ENCODE measurements at regions of chr6 and their contacts with region 1.

Region 1: DNA sequence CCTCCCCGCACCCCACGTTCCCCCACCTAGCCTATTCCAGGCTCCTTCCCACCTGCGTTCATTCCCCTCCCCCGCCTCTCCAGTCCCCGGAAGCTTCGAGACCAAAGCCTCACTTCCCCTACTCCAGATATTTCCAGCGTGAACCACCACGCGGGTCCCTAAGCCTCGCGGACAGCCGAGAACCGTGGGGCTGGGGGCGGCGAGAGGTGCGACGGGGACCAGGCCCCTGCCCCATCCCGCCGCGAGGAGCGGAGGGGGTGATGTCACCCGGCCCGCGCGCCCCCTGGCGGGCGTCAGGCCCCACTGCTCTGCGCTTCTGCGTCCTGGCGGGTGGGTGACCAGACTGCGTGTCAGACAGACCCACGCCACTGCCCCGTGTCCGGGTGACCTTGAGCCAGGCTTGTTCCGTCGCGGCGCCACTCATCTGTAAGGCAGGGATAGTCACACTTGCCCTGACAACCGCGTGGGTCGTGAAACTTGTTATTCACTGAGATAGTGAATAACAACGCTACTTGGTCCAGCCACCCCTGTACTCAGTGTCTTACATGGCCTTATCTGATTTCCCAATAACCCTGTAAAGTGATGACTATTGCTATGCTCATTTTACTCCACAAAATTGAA is 9.0 kb upstream of the HSP90AB1 start:
- DNase-seq: peak; percentile 70 to 85 (median 76)
- H3K4me3 ChIP-seq: peak overlapping the region; percentile 77
- H3K4me3 Mint-ChIP-seq: peak overlapping the region; percentile 84 to 95 (median 89)
- H3K27ac ChIP-seq: peak overlapping the region; percentile 87
- H3K27ac Mint-ChIP-seq: peak overlapping the region; percentile 63 to 98 (median 96)
- H3K4me1 ChIP-seq: peaks cover 12% of the 10 kb centered on the region
- H3K4me1 Mint-ChIP-seq: peaks cover 10 to 15% (median 10%) of the 10 kb centered on the region in 3 donors
- H3K27me3 ChIP-seq: no peaks in the 10 kb centered on the region
- H3K27me3 Mint-ChIP-seq: peaks cover 0 to 2% of the 10 kb centered on the region in 2 donors

Region 2: GRCh38 chr6:44161997-44162338 is 76.0 kb before region 1 on chr6:
- CTCF ChIA-PET with region 1: no interaction called
- POLR2A ChIA-PET with region 1: no interaction called
- DNase-seq: no peak
- H3K4me3 ChIP-seq: no peak overlapping the region
- H3K4me3 Mint-ChIP-seq: no peak overlapping the region
- H3K27ac ChIP-seq: no peak overlapping the region
- H3K27ac Mint-ChIP-seq: no peak overlapping the region
- H3K4me1 ChIP-seq: no peaks in the 10 kb centered on the region
- H3K4me1 Mint-ChIP-seq: no peaks in the 10 kb centered on the region
- H3K27me3 ChIP-seq: no peaks in the 10 kb centered on the region
- H3K27me3 Mint-ChIP-seq: peaks cover 25 to 48% of the 10 kb centered on the region in 2 donors

Region 3: GRCh38 chr6:44172731-44173500 is 65.0 kb before region 1 on chr6:
- CTCF ChIA-PET with region 1: interaction called, 11 read pairs
- POLR2A ChIA-PET with region 1: no interaction called
- DNase-seq: peak; percentile 48 to 80 (median 63)
- H3K4me3 ChIP-seq: no peak overlapping the region
- H3K4me3 Mint-ChIP-seq: no peak overlapping the region
- H3K27ac ChIP-seq: no peak overlapping the region
- H3K27ac Mint-ChIP-seq: peak overlapping the region in 2 of 8 donors; percentile 1 to 72
- H3K4me1 ChIP-seq: peaks cover 3% of the 10 kb centered on the region
- H3K4me1 Mint-ChIP-seq: peaks cover 8 to 14% (median 11%) of the 10 kb centered on the region in 3 donors
- H3K27me3 ChIP-seq: no peaks in the 10 kb centered on the region
- H3K27me3 Mint-ChIP-seq: peaks cover 10 to 14% of the 10 kb centered on the region in 2 donors

Region 4: DNA sequence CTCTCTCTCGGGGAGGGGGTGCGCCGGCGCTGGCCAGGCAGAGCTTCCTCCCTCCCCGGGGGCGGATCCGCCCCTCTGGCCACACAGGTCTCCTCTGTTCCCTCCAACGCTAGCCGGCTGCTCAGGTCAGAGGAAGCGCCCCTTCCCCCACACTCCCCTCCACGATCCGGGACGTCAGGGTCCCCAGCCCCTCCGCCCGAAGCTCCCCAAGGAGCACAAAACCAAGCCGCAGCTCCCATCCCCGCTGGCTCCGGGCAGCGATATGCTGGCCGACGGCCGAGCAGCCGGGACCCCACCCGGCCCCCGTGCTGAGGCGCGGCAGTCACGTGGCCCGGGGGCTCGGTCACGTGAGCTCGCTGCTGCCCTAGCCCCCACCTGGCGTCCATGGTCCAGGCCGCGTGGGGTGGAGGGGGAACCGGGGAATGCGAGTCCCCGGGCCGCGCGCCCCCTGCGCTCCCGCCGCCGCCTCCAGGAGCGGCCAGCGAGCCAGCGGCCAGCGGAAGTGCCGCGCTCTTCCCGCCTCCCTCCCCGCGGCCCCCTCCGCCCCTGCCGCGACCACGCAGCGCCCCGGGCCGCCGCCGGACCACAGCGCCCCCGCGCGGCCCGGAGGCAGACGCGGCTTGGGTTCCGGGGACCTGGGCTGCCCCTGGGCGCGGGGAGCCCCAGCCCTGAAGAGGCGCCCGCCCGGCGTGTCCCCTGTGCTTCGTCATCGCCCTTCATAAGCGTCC is 19.3 kb after region 1 on chr6 and contains the start of gene SLC35B2:
- CTCF ChIA-PET with region 1: interaction called, 12 read pairs
- POLR2A ChIA-PET with region 1: no interaction called
- DNase-seq: peak; percentile 58 to 77 (median 72)
- H3K4me3 ChIP-seq: peak within 1 kb of the TSS; percentile 84
- H3K4me3 Mint-ChIP-seq: peak within 1 kb of the TSS; percentile 88 to 92 (median 91)
- H3K27ac ChIP-seq: peak within 1 kb of the TSS; percentile 81
- H3K27ac Mint-ChIP-seq: peak within 1 kb of the TSS; percentile 92 to 99 (median 95)
- H3K4me1 ChIP-seq: peaks cover 25% of the 10 kb centered on the region
- H3K4me1 Mint-ChIP-seq: peaks cover 51 to 71% (median 61%) of the 10 kb centered on the region in 3 donors
- H3K27me3 ChIP-seq: no peaks in the 10 kb centered on the region
- H3K27me3 Mint-ChIP-seq: peaks cover 0 to 3% of the 10 kb centered on the region in 2 donors
- total RNA-seq, gene SLC35B2: 34.8 to 35.7 TPM